ENCODE measurements at regions of chr17 and their contacts with region 1.

Region 1: GRCh38 chr17:409848-410545 is 57.4 kb upstream of the RPH3AL start:
- DNase-seq: peak; percentile 89 to 99 (median 96)

Region 2: GRCh38 chr17:700504-701094 is 290.6 kb after region 1 on chr17:
- intact Hi-C with region 1: loop called (anchors 5 kb)
- DNase-seq: peak in 2 of 42 donors; percentile 16 to 26